ENCODE measurements at regions of chr7 and their contacts with region 1.

Region 1: GRCh38 chr7:151315038-151315655 is 26.5 kb upstream of the NUB1 start:
- DNase-seq: peak; percentile 85
- H3K4me3 Mint-ChIP-seq: no peak overlapping the region
- H3K27ac Mint-ChIP-seq: no peak overlapping the region
- H3K4me1 Mint-ChIP-seq: no peaks in the 10 kb centered on the region
- H3K27me3 Mint-ChIP-seq: peaks cover 16% of the 10 kb centered on the region
- CTCF ChIP-seq: peak; percentile 75

Region 2: GRCh38 chr7:151351027-151351426 is 35.9 kb after region 1 on chr7:
- CTCF ChIA-PET with region 1: interaction called, 6 read pairs
- intact Hi-C with region 1: loop called (anchors 1 kb)
- DNase-seq: peak; percentile 21
- H3K4me3 Mint-ChIP-seq: no peak overlapping the region
- H3K27ac Mint-ChIP-seq: no peak overlapping the region
- H3K4me1 Mint-ChIP-seq: peaks cover 20% of the 10 kb centered on the region
- H3K27me3 Mint-ChIP-seq: no peaks in the 10 kb centered on the region
- CTCF ChIP-seq: peak; percentile 43

Region 3: DNA sequence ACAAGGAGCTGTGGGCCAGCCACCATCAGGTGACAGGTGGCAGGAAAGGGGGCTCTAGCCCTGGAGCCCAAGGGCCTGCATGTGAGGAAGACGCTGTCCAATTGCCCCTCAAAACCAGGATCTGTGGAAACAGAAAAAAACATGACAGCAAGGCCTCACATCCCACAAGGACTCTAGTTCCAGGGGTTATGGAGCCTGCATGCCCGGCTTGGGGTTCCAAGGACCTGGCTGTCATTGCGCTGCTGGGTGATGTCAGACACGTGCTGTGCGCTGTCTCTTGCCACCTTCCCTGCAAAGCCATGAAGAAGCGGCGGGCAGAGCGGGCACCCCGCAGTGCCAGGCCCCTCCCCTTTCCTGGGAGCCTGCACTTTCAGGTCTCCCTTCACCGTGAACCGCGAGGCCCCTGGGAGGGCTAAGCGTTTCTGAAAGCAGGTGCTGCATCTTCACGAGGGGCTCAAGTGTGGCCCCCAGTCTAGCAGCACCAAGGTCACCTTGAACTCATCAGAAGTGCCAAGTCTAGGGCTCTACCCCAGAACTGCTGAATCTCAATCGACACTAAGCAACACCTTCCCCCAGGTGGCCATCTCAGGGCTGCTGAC is 139.9 kb after region 1 on chr7:
- CTCF ChIA-PET with region 1: no interaction called
- intact Hi-C with region 1: no loop called
- DNase-seq: no peak
- H3K4me3 Mint-ChIP-seq: no peak overlapping the region
- H3K27ac Mint-ChIP-seq: no peak overlapping the region
- H3K4me1 Mint-ChIP-seq: peaks cover 8% of the 10 kb centered on the region
- H3K27me3 Mint-ChIP-seq: peaks cover 35% of the 10 kb centered on the region
- CTCF ChIP-seq: no peak

Region 4: GRCh38 chr7:151863386-151864079 is 548.4 kb after region 1 on chr7:
- CTCF ChIA-PET with region 1: no interaction called
- intact Hi-C with region 1: no loop called
- DNase-seq: no peak
- H3K4me3 Mint-ChIP-seq: no peak overlapping the region
- H3K27ac Mint-ChIP-seq: no peak overlapping the region
- H3K4me1 Mint-ChIP-seq: no peaks in the 10 kb centered on the region
- H3K27me3 Mint-ChIP-seq: peaks cover 34% of the 10 kb centered on the region
- CTCF ChIP-seq: no peak